K562 (cell line): ENCODE measurements at regions of chr1 and their contacts with region 1.

Region 1: GRCh38 chr1:75265792-75266191 is 131.6 kb downstream of the LHX8 start:
- DNase-seq: peak; percentile 16 to 52 (median 22)
- ATAC-seq: peak; percentile 88
- H3K4me3 ChIP-seq: no peak overlapping the region
- H3K27ac ChIP-seq: no peak overlapping the region
- H3K4me1 ChIP-seq: no peaks in the 10 kb centered on the region
- H3K27me3 ChIP-seq: no peaks in the 10 kb centered on the region
- CTCF ChIP-seq: peak; percentile 57 to 72 (median 67); a peak in 5 of 6 replicates
- EP300 ChIP-seq: no peak
- POLR2A ChIP-seq: no peak
- RAD21 ChIP-seq: peak; percentile 86 to 91

Region 2: DNA sequence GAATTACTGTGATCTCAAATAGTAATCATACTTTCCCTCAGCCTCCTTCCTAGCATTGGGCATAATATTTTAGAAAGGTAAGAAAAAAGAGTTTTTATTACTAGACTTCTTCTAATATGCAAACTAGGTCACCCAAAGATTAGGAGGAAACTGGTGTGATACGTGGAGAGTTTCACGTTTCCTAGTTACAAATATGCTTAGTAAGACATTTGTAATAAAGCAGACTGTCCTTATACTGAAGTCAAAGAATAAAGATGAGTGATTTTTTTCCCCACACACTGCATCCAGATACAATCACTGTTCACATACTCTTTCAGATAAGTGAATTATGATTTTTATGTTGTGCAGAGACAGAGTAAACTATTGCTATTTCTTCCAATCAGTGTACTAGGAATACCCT is 113.7 kb before region 1 on chr1:
- CTCF ChIA-PET with region 1: no interaction called
- POLR2A ChIA-PET with region 1: no interaction called
- in situ Hi-C with region 1: no loop called
- intact Hi-C with region 1: no loop called
- DNase-seq: no peak
- ATAC-seq: no peak
- H3K4me3 ChIP-seq: no peak overlapping the region
- H3K27ac ChIP-seq: no peak overlapping the region
- H3K4me1 ChIP-seq: no peaks in the 10 kb centered on the region
- H3K27me3 ChIP-seq: no peaks in the 10 kb centered on the region
- CTCF ChIP-seq: no peak
- EP300 ChIP-seq: no peak
- POLR2A ChIP-seq: no peak
- RAD21 ChIP-seq: no peak

Region 3: GRCh38 chr1:75245239-75245638 is 20.6 kb before region 1 on chr1:
- CTCF ChIA-PET with region 1: no interaction called
- POLR2A ChIA-PET with region 1: no interaction called
- in situ Hi-C with region 1: no loop called
- intact Hi-C with region 1: no loop called
- DNase-seq: no peak
- ATAC-seq: no peak
- H3K4me3 ChIP-seq: no peak overlapping the region
- H3K27ac ChIP-seq: no peak overlapping the region
- H3K4me1 ChIP-seq: no peaks in the 10 kb centered on the region
- H3K27me3 ChIP-seq: no peaks in the 10 kb centered on the region
- CTCF ChIP-seq: no peak
- EP300 ChIP-seq: no peak
- POLR2A ChIP-seq: no peak
- RAD21 ChIP-seq: no peak

Region 4: DNA sequence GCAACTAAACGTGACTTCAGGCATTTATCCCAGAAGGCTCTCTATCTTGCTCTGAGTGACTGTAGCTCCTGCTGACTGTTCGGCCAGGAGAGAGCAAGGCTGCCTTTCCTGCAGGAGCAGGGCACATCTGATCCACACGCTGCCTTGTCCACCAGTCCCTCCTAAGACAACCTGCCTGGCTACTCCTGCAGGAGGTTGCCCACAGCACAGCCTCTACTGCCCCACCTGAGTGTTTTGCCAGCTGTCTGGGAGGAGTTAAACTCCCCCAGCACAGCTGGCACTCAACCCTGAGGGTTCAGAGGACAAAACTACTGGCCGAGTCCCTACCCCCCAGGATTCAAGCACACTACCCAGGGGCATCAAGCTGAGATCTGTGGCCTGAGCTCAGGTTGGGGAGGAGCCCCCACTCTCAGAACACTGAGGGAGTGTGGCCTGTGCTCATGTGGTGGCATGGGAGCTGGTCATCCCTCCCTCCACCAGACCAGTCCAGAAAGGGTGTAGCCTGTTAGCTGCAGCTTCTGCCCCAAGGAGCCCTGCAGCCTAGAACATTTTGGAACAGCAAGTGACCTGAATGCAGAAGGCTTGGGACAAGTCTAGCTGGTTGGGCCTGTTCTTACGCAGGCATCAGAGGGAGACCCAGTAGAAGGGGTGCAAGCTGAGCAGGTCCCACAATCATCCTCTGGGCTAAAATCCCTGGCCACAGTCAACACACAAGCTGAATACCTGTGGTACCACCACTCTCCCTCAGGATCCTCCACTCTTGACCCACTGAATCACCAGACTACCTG is 107.9 kb after region 1 on chr1:
- CTCF ChIA-PET with region 1: no interaction called
- POLR2A ChIA-PET with region 1: no interaction called
- in situ Hi-C with region 1: no loop called
- intact Hi-C with region 1: loop called (anchors 5 kb)
- DNase-seq: no peak
- ATAC-seq: peak; percentile 42
- H3K4me3 ChIP-seq: no peak overlapping the region
- H3K27ac ChIP-seq: no peak overlapping the region
- H3K4me1 ChIP-seq: peaks cover 0 to 11% of the 10 kb centered on the region in 2 experiments; a peak in 2 of 5 replicates
- H3K27me3 ChIP-seq: no peaks in the 10 kb centered on the region
- CTCF ChIP-seq: no peak
- EP300 ChIP-seq: no peak
- POLR2A ChIP-seq: no peak
- RAD21 ChIP-seq: no peak

Region 5: GRCh38 chr1:75423616-75424015 is 157.8 kb after region 1 on chr1:
- CTCF ChIA-PET with region 1: no interaction called
- POLR2A ChIA-PET with region 1: no interaction called
- in situ Hi-C with region 1: no loop called
- intact Hi-C with region 1: loop called (anchors 5 kb)
- DNase-seq: peak; percentile 8 to 70 (median 36)
- ATAC-seq: peak; percentile 91
- H3K4me3 ChIP-seq: no peak overlapping the region
- H3K27ac ChIP-seq: no peak overlapping the region
- H3K4me1 ChIP-seq: peaks cover 0 to 21% of the 10 kb centered on the region in 2 experiments; a peak in 3 of 5 replicates
- H3K27me3 ChIP-seq: no peaks in the 10 kb centered on the region
- CTCF ChIP-seq: peak; percentile 30 to 44 (median 37); a peak in 3 of 6 replicates
- EP300 ChIP-seq: peak; percentile 83
- POLR2A ChIP-seq: no peak
- RAD21 ChIP-seq: peak in 1 of 2 experiments; percentile 31; a peak in 2 of 4 replicates

Region 6: DNA sequence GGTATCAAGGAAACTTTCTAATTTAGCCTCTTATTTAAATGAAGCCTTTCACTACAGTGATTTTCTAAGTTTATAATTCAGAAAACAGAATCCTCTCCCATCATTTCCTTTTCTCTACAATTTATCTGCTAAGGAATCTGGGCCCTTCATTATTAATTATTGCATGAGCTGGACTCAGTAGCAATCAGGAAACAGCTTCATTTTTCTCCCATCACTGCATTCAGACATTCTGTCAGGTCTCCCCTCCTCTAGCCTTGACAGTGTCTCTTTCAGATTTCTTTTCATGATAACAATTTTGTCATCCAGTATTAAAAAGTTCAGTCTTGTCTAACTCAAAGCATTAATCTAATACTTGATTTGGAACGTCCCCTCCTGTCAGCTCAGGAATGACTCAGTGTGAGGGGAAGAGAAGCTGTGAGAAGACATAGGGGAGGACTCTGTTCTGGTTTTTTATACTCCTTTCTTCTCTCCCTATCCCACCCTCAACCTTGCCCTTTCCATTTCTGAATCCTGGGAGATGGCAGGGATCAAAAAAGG is 317.0 kb after region 1 on chr1:
- CTCF ChIA-PET with region 1: interaction called, 4 read pairs
- POLR2A ChIA-PET with region 1: no interaction called
- in situ Hi-C with region 1: no loop called
- intact Hi-C with region 1: loop called (anchors 2 kb)
- DNase-seq: no peak
- ATAC-seq: peak; percentile 76
- H3K4me3 ChIP-seq: no peak overlapping the region
- H3K27ac ChIP-seq: no peak overlapping the region
- H3K4me1 ChIP-seq: no peaks in the 10 kb centered on the region
- H3K27me3 ChIP-seq: no peaks in the 10 kb centered on the region
- CTCF ChIP-seq: peak; percentile 22 to 56 (median 32); a peak in 3 of 6 replicates
- EP300 ChIP-seq: no peak
- POLR2A ChIP-seq: no peak
- RAD21 ChIP-seq: peak; percentile 58 to 76

Region 7: GRCh38 chr1:75615613-75616435 is 350.0 kb after region 1 on chr1:
- CTCF ChIA-PET with region 1: no interaction called
- POLR2A ChIA-PET with region 1: no interaction called
- in situ Hi-C with region 1: no loop called
- intact Hi-C with region 1: loop called (anchors 5 kb)
- DNase-seq: peak; percentile 9 to 27 (median 26)
- ATAC-seq: peak; percentile 65
- H3K4me3 ChIP-seq: peak overlapping the region; percentile 26; the same call in 1 of the 2 replicates
- H3K27ac ChIP-seq: no peak overlapping the region
- H3K4me1 ChIP-seq: peaks cover 8 to 23% of the 10 kb centered on the region in 2 experiments; a peak in 4 of 5 replicates
- H3K27me3 ChIP-seq: peaks cover 10 to 32% of the 10 kb centered on the region in 2 experiments; a peak in 3 of 5 replicates
- CTCF ChIP-seq: no peak
- EP300 ChIP-seq: no peak
- POLR2A ChIP-seq: no peak
- RAD21 ChIP-seq: no peak

Region 8: GRCh38 chr1:75632350-75632949 is 366.7 kb after region 1 on chr1:
- CTCF ChIA-PET with region 1: interaction called, 14 read pairs
- POLR2A ChIA-PET with region 1: no interaction called
- in situ Hi-C with region 1: no loop called
- intact Hi-C with region 1: loop called (anchors 1 kb)
- DNase-seq: peak; percentile 34 to 52 (median 44)
- ATAC-seq: peak; percentile 89
- H3K4me3 ChIP-seq: no peak overlapping the region
- H3K27ac ChIP-seq: no peak overlapping the region
- H3K4me1 ChIP-seq: no peaks in the 10 kb centered on the region
- H3K27me3 ChIP-seq: no peaks in the 10 kb centered on the region
- CTCF ChIP-seq: peak; percentile 63 to 77 (median 70); a peak in 5 of 6 replicates
- EP300 ChIP-seq: no peak
- POLR2A ChIP-seq: no peak
- RAD21 ChIP-seq: peak; percentile 87 to 95

Region 9: DNA sequence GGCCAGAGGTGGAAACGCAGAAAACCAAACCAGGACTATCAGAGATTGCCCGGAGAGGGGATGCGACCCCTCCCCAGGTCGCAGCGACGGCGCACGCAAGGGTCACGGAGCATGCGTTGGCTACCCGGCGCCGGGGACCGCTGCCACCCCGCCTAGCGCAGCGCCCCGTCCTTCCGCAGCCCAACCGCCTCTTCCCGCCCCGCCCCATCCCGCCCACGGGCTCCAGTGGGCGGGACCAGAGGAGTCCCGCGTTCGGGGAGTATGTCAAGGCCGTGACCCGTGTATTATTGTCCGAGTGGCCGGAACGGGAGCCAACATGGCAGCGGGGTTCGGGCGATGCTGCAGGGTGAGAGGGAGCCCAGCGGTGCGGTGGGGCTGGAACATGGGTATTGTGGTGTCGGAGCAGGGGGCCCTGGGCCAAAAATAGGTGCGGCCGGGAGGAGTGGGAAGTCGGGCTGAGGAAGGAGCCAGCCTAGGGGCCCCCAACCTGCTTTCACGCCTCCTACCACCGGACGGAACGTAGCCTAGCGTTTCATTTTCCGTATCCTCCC is 458.8 kb after region 1 on chr1 and contains the start of gene ACADM:
- CTCF ChIA-PET with region 1: no interaction called
- POLR2A ChIA-PET with region 1: interaction called, 3 read pairs
- in situ Hi-C with region 1: no loop called
- intact Hi-C with region 1: loop called (anchors 10 kb)
- DNase-seq: peak; percentile 92 to 96 (median 92)
- ATAC-seq: peak; percentile 86
- H3K4me3 ChIP-seq: peak within 1 kb of the TSS; percentile 77
- H3K27ac ChIP-seq: peak within 1 kb of the TSS; percentile 95
- H3K4me1 ChIP-seq: peaks cover 0 to 10% of the 10 kb centered on the region in 2 experiments; a peak in 3 of 5 replicates
- H3K27me3 ChIP-seq: no peaks in the 10 kb centered on the region
- CTCF ChIP-seq: no peak; a peak in 1 of 6 replicates
- EP300 ChIP-seq: peak; percentile 48; the same call in 1 of the 2 replicates
- POLR2A ChIP-seq: peak; percentile 95
- RAD21 ChIP-seq: no peak
- polyA plus RNA-seq, gene ACADM: 103 to 119 TPM